RWPE1 (cell line): ENCODE measurements at regions of chr18 and their contacts with region 1.

Region 1: GRCh38 chr18:49697757-49698524 is 115.4 kb downstream of the ACAA2 start:
- DNase-seq: no peak
- H3K27ac ChIP-seq: no peak overlapping the region
- CTCF ChIP-seq: no peak

Region 2: DNA sequence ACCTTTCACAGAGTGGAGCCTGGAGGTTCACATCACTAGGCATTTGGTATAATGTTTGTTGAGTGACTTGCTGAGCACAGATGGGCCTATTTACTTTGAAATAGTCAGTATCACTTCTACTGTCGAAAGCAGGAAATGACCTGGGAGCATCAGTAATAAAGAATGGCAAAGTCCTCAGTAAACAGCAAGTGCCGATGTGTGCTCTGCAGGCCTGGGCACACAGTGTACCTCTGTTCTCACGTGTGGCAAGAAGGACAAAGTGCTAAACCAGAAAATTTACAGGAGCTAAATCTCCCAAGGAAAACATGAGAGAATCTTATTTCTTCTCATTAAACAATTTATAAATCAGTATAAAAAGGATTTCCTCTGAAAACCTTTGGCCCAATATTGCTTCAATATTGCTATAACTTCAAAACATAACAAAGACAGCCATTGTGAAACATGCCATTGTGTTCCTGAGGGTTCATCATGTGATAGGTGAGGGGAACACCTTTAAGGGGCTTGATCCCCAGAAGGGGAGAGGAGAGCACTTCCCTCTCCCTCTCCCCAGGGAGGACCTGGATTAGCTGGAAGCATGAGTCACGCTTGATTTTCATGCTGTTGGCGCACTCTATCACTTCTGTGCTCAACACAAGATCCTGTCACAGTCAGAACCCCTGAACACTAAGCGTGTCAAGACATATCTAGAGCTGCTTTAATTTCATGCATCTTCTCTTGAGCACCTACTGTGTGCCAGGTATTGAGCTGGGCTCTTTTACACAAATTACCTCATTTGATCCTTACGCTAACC is 1636.0 kb before region 1 on chr18:
- CTCF ChIA-PET with region 1: no interaction called
- POLR2A ChIA-PET with region 1: no interaction called
- DNase-seq: no peak
- H3K27ac ChIP-seq: peak overlapping the region; percentile 55
- CTCF ChIP-seq: no peak

Region 3: GRCh38 chr18:51330148-51330547 is 1632.2 kb after region 1 on chr18:
- CTCF ChIA-PET with region 1: interaction called, 11 read pairs
- POLR2A ChIA-PET with region 1: no interaction called
- DNase-seq: peak; percentile 60
- H3K27ac ChIP-seq: peak overlapping the region; percentile 54
- CTCF ChIP-seq: no peak